WTC11 (cell line): ENCODE measurements at regions of chr11 and their contacts with region 1.

Region 1: DNA sequence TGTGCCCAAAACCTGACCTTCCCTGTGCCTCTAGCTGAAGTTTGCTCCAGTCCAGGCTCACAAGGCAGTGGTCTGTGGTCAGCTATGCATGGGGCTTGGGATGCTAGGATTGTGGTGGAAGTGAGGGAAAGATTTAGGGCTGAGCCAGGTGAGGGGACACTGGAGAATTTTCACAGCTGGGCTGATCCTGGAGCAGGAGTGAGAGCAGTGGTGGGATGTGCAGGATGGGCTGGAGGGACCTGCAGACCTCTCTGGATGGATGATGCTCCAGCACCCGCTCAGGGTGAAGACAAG is 23.9 kb upstream of the KDM2A start:
- DNase-seq: no peak
- ATAC-seq: no peak
- H3K4me3 Mint-ChIP-seq: no peak overlapping the region
- H3K27ac Mint-ChIP-seq: no peak overlapping the region
- H3K4me1 Mint-ChIP-seq: peaks cover 15% of the 10 kb centered on the region
- H3K27me3 Mint-ChIP-seq: no peaks in the 10 kb centered on the region
- CTCF ChIP-seq: peak; percentile 8; the same call in 1 of the 2 replicates

Region 2: GRCh38 chr11:66835768-66836405 is 259.3 kb before region 1 on chr11:
- CTCF ChIA-PET with region 1: no interaction called
- POLR2A ChIA-PET with region 1: no interaction called
- DNase-seq: no peak
- ATAC-seq: no peak
- H3K4me3 Mint-ChIP-seq: no peak overlapping the region
- H3K27ac Mint-ChIP-seq: no peak overlapping the region
- H3K4me1 Mint-ChIP-seq: peaks cover 2% of the 10 kb centered on the region
- H3K27me3 Mint-ChIP-seq: no peaks in the 10 kb centered on the region
- CTCF ChIP-seq: no peak

Region 3: GRCh38 chr11:67053896-67054842 is 41.0 kb before region 1 on chr11:
- CTCF ChIA-PET with region 1: interaction called, 10 read pairs
- POLR2A ChIA-PET with region 1: no interaction called
- DNase-seq: peak; percentile 83
- ATAC-seq: peak; percentile 72
- H3K4me3 Mint-ChIP-seq: no peak overlapping the region
- H3K27ac Mint-ChIP-seq: no peak overlapping the region
- H3K4me1 Mint-ChIP-seq: peaks cover 23% of the 10 kb centered on the region
- H3K27me3 Mint-ChIP-seq: no peaks in the 10 kb centered on the region; the same call in 1 of the 2 replicates
- CTCF ChIP-seq: peak; percentile 49

Region 4: DNA sequence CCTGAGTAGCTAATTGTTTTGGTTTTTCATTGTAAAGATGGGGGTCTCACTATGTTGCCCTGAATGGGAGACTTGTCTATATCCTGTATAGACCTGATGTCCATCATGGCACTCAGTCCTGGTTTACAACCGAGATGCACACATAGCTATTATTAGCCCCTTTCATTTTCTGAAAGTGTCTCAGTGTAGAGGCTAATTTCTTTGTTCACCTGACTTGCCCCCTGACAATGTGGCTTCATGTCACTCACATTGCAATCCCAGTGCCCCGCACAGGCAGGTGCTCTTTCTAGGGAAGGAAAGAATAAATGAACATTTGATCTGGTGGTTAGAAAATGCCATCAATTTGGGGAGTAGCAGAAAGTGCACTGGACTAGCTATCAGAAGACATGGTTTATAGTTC is 10.8 kb after region 1 on chr11:
- CTCF ChIA-PET with region 1: interaction called, 16 read pairs
- POLR2A ChIA-PET with region 1: no interaction called
- DNase-seq: no peak
- ATAC-seq: no peak
- H3K4me3 Mint-ChIP-seq: no peak overlapping the region
- H3K27ac Mint-ChIP-seq: no peak overlapping the region
- H3K4me1 Mint-ChIP-seq: peaks cover 9% of the 10 kb centered on the region
- H3K27me3 Mint-ChIP-seq: no peaks in the 10 kb centered on the region
- CTCF ChIP-seq: no peak

Region 5: DNA sequence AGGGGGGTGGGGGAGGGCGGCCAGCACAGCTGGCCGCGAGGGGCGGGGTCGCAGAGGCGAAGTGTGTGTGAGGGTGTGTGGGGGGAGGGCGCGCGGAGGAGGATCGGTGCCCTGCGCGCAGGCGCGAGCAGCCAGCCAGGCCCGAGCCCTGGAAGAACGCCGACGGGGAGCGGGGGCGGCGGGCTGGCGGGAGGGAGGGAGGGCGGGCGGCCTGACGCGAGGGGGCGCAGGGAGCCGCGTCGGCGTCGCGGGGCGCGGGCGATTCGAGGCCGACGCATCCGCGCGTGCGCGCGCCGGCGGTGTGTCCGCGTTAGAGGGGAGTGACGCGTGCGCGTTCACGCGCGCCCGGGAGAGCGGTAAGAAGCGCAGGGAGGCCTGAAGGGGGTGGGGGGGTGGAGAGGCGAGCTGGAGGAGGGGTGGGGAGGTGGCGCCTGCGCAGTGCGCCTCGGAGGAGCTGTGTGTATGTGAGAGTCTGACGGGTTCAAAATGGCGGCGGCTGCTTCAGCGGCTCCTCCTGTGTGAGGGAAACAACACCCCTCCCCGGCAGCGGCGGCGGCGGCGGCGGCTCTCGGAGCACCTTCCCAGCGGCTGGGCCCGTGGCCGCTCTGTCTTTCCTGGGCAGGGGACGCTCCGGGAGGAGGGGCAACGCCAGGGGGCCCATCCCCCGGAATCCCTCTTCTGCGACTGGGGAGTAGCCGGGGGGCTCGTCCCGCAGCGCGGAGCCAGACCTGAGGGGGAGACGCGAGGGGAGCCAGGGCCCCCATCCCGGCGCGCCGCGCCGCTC is 23.8 kb after region 1 on chr11 and contains the start of gene KDM2A:
- CTCF ChIA-PET with region 1: interaction called, 14 read pairs
- POLR2A ChIA-PET with region 1: no interaction called
- DNase-seq: peak; percentile 98
- ATAC-seq: peak; percentile 83
- H3K4me3 Mint-ChIP-seq: peak within 1 kb of the TSS; percentile 94
- H3K27ac Mint-ChIP-seq: peak within 1 kb of the TSS; percentile 96
- H3K4me1 Mint-ChIP-seq: peaks cover 32% of the 10 kb centered on the region
- H3K27me3 Mint-ChIP-seq: peaks cover 4% of the 10 kb centered on the region; the same call in 1 of the 2 replicates
- CTCF ChIP-seq: no peak
- total RNA-seq, gene KDM2A: 54.0 to 58.0 TPM (median 54.3 TPM) in 3 replicates